ENCODE measurements at regions of chr5 and their contacts with region 1.

Region 1: DNA sequence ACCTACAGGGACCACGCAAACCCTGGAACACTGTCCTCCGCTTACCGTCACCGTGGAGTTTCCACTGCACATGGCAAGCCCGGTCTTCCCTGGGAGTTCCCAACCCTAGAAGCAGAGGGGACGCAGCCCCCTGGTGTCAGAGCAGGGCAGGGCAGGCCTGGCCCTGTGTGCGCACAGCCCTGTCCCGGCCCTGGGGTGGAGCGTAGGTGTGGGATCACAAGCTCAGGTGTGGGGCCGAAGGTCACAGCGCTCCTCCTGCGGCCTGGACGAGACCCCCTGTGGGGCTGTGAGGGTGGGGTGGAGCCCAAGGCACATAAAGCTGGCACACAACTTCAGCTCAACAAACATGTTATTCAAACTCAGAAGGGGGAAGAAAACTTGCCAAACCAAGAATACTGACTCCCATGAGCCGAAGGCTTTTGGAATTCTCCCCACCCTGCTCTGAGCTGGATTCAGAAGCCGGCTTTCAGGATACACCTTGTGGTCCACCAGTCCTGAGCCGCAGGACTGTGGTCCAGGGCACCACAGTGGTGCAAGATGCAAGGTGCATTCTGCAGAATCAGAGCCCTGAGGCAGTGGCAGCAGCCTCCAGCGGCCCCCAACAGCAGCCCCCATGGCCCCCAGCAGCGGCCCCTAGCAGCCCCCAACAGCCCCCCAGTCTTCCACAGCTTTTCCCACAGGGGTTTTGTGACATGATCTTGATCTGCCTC is 11.8 kb upstream of the EXOC3 start:
- DNase-seq: peak; percentile 58
- H3K4me3 ChIP-seq: no peak overlapping the region
- H3K27ac ChIP-seq: no peak overlapping the region
- H3K4me1 ChIP-seq: peaks cover 7% of the 10 kb centered on the region; the same call in 1 of the 2 replicates
- H3K27me3 ChIP-seq: no peaks in the 10 kb centered on the region

Region 2: GRCh38 chr5:317086-317811 is 113.9 kb before region 1 on chr5:
- in situ Hi-C with region 1: loop called (anchors 10 kb)
- DNase-seq: peak; percentile 89
- H3K4me3 ChIP-seq: no peak overlapping the region
- H3K27ac ChIP-seq: no peak overlapping the region
- H3K4me1 ChIP-seq: peaks cover 14% of the 10 kb centered on the region
- H3K27me3 ChIP-seq: no peaks in the 10 kb centered on the region

Measured in GM23248 (cell line).